ENCODE measurements at regions of chr11 and their contacts with region 1.

Region 1: GRCh38 chr11:94602430-94603372 is 35.5 kb downstream of the PIWIL4 start:
- DNase-seq: no peak
- ATAC-seq: peak; percentile 80
- H3K4me3 Mint-ChIP-seq: peak overlapping the region; percentile 8
- H3K27ac Mint-ChIP-seq: peak overlapping the region; percentile 68
- H3K4me1 Mint-ChIP-seq: peaks cover 9% of the 10 kb centered on the region
- H3K27me3 Mint-ChIP-seq: no peaks in the 10 kb centered on the region
- CTCF ChIP-seq: no peak

Region 2: DNA sequence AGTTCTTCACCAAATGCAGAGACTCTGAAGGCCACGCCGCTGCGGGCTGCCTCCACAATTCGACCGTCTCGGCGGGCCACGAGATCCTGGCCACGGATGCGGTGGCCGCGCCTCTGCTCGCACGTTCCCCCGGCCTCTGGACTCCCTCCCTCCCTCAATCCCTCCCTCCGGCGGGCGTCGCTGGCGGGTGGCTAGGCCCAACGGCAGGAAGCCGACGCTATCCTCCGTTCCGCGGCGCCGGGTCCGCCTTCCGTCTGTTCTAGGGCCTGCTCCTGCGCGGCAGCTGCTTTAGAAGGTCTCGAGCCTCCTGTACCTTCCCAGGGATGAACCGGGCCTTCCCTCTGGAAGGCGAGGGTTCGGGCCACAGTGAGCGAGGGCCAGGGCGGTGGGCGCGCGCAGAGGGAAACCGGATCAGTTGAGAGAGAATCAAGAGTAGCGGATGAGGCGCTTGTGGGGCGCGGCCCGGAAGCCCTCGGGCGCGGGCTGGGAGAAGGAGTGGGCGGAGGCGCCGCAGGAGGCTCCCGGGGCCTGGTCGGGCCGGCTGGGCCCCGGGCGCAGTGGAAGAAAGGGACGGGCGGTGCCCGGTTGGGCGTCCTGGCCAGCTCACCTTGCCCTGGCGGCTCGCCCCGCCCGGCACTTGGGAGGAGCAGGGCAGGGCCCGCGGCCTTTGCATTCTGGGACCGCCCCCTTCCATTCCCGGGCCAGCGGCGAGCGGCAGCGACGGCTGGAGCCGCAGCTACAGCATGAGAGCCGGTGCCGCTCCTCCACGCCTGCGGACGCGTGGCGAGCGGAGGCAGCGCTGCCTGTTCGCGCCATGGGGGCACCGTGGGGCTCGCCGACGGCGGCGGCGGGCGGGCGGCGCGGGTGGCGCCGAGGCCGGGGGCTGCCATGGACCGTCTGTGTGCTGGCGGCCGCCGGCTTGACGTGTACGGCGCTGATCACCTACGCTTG is 58.7 kb before region 1 on chr11 and contains the start of gene FUT4:
- CTCF ChIA-PET with region 1: no interaction called
- POLR2A ChIA-PET with region 1: interaction called, 4 read pairs
- intact Hi-C with region 1: loop called (anchors 1 kb)
- DNase-seq: peak; percentile 72
- ATAC-seq: peak; percentile 83
- H3K4me3 Mint-ChIP-seq: peak within 1 kb of the TSS; percentile 98
- H3K27ac Mint-ChIP-seq: peak within 1 kb of the TSS; percentile 97
- H3K4me1 Mint-ChIP-seq: peaks cover 17% of the 10 kb centered on the region
- H3K27me3 Mint-ChIP-seq: peaks cover 10% of the 10 kb centered on the region
- CTCF ChIP-seq: no peak
- total RNA-seq, gene FUT4: 3.4 and 4.1 TPM in 2 replicates

Region 3: DNA sequence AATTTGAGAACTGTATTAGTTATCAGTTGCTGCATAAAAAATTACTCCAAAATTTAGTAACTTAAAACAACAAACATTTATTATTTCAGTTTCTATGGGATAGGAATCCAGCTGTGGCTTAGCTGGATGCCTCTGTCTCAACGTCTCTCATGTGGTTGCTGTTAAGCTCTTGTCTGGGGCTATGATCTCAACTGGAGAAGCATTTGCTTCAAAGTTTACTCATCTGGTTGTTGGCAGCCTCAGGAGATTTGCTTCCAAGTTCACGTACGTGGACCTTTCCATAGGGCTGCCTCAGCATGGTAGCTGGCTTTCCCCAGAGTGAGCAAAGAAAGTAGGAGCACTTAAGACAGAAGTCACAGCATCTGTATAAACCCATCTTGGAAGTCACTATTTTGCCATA is 773.2 kb after region 1 on chr11:
- CTCF ChIA-PET with region 1: no interaction called
- POLR2A ChIA-PET with region 1: no interaction called
- intact Hi-C with region 1: no loop called
- DNase-seq: no peak
- ATAC-seq: no peak
- H3K4me3 Mint-ChIP-seq: no peak overlapping the region
- H3K27ac Mint-ChIP-seq: no peak overlapping the region
- H3K4me1 Mint-ChIP-seq: no peaks in the 10 kb centered on the region
- H3K27me3 Mint-ChIP-seq: no peaks in the 10 kb centered on the region
- CTCF ChIP-seq: no peak

Measured in activated B cell treated with CpG ODN at 0.5 μM for 24 hours (primary cell).